ENCODE measurements at regions of chr12 and their contacts with region 1.

Region 1: DNA sequence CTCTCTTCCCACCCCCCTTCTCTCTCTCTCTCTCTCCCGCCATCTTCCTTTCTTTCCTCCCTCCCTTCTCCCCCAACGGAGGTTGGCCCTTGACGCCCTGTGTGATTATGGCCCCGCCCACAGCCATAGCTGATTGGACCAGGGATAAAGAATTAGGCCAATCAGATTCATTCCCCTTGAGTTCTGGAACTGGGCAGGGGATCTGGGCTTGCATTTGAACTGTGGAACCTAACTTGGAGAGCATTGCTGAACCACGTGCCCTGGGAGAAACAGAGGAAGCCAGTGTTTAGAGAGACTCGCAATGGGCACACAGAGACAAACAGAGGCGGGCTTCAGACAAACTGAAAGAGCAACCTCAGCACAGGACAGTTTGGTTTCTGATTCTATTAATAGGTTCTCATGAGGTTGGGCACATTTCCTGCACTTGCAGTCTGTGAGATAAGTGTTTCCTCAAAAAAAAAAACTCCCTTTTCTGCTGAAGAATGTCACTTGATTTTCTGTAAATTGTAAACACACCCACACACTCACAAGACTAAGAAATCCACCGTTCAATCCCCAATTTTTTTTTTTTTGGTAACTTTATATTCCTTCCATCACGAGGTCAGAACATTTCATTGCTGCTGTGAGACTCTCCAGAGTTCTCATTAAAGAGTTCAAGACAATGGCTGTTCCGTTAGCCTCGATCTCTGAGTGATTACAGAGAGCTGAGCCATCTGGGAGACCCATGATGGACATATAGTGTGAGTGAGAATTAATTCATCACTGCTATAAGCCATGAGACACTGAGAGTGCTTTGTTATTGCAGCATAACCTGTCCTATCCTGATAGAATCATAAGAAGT is 3.5 kb upstream of the P2RX7 start:
- DNase-seq: peak; percentile 81
- H3K4me3 Mint-ChIP-seq: peak overlapping the region; percentile 68
- H3K27ac Mint-ChIP-seq: peak overlapping the region; percentile 99
- H3K4me1 Mint-ChIP-seq: peaks cover 80% of the 10 kb centered on the region
- H3K27me3 Mint-ChIP-seq: no peaks in the 10 kb centered on the region

Region 2: DNA sequence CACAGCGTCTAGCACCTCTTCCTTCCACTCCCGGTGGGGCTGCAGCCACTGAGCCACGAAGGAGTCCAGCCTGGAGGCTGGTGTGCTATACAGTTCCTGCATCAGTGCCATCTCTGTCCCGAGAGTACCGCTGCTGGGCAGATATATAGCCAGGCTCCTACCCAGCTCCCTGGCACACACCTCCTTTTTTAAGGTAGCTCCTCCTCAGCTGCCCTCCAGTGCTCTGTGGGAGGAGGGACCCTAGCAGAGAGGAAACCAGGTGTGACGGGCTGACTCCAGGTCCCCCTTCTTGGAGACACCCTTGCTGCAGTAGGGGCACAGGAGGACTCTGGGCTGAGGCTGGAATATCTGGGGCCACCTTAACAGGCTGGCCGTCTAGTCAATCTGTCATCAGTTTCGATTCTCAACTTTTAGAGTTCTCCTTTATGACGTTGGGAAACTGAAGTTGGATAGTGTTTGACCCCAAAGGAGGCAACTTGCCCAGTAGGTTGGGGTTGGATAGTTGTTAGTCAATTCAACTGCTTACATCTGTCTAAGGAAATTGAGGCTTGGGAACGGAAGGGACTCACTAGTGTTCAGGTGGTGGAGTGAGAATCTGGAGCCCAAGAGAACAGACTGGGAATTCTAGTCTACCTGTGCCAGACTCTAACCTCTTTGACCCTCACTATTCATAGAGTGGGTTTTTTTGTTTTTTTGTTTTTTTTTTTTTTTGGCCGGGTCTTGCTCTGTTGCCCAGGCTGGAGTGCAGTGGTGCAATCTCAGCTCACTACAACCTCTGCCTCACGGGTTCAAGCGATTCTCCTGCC is 90.1 kb before region 1 on chr12 and contains the start of gene OASL:
- intact Hi-C with region 1: loop called (anchors 10 kb)
- DNase-seq: peak; percentile 54
- H3K4me3 Mint-ChIP-seq: peak within 1 kb of the TSS; percentile 91
- H3K27ac Mint-ChIP-seq: peak within 1 kb of the TSS; percentile 84
- H3K4me1 Mint-ChIP-seq: peaks cover 51% of the 10 kb centered on the region
- H3K27me3 Mint-ChIP-seq: peaks cover 12% of the 10 kb centered on the region
- total RNA-seq, gene OASL: 2.4 and 3.1 TPM in 2 replicates

Region 3: DNA sequence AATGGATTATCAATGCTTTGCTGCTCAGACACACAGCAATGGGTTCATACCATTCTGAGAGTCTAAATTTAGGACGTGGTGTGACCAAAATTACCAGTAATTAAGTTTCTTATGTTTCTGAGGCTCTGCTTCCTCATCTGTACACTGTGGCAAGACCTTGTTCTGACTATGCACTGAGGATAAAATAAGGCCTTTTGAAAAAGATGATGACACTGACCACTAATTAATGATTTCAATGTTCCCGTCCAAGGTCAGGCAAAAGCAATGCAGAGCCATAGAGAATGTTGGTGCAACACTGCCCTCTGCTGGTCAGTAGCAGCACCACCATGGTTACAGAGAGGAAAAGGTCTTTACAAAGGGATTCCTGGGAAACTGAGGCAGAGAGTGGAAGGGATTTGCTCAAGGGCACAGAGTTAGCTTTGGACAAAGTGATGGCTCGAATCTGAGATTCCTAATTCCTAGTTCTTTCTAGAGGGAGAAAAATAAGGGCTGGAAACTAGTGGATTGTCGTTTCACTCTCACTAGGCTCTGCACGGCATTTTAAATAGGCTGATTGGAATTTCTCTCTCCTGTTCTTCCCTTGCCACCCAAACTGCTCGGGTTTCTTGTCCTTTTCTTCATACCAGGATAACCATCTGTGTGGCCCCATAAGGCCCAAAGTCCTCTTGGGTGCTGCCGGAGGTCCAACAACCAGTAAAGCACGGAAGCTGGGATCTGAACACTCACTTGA is 18.8 kb before region 1 on chr12:
- intact Hi-C with region 1: loop called (anchors 1 kb)
- DNase-seq: peak; percentile 40
- H3K4me3 Mint-ChIP-seq: no peak overlapping the region
- H3K27ac Mint-ChIP-seq: peak overlapping the region; percentile 21
- H3K4me1 Mint-ChIP-seq: peaks cover 8% of the 10 kb centered on the region
- H3K27me3 Mint-ChIP-seq: peaks cover 4% of the 10 kb centered on the region

Region 4: GRCh38 chr12:121144416-121144914 is 15.3 kb after region 1 on chr12:
- intact Hi-C with region 1: loop called (anchors 1 kb)
- DNase-seq: no peak
- H3K4me3 Mint-ChIP-seq: peak overlapping the region; percentile 58
- H3K27ac Mint-ChIP-seq: peak overlapping the region; percentile 81
- H3K4me1 Mint-ChIP-seq: peaks cover 27% of the 10 kb centered on the region
- H3K27me3 Mint-ChIP-seq: no peaks in the 10 kb centered on the region

Region 5: GRCh38 chr12:121181181-121181580 is 52.0 kb after region 1 on chr12:
- intact Hi-C with region 1: loop called (anchors 1 kb)
- DNase-seq: no peak
- H3K4me3 Mint-ChIP-seq: no peak overlapping the region
- H3K27ac Mint-ChIP-seq: no peak overlapping the region
- H3K4me1 Mint-ChIP-seq: peaks cover 5% of the 10 kb centered on the region
- H3K27me3 Mint-ChIP-seq: no peaks in the 10 kb centered on the region

Region 6: GRCh38 chr12:121209624-121210572 is 80.7 kb after region 1 on chr12 and contains the start of gene P2RX4:
- intact Hi-C with region 1: loop called (anchors 1 kb)
- DNase-seq: peak; percentile 87
- H3K4me3 Mint-ChIP-seq: peak within 1 kb of the TSS; percentile 85
- H3K27ac Mint-ChIP-seq: peak within 1 kb of the TSS; percentile 94
- H3K4me1 Mint-ChIP-seq: peaks cover 33% of the 10 kb centered on the region
- H3K27me3 Mint-ChIP-seq: peaks cover 1% of the 10 kb centered on the region
- total RNA-seq, gene P2RX4: 22.8 and 25.3 TPM in 2 replicates

Region 7: DNA sequence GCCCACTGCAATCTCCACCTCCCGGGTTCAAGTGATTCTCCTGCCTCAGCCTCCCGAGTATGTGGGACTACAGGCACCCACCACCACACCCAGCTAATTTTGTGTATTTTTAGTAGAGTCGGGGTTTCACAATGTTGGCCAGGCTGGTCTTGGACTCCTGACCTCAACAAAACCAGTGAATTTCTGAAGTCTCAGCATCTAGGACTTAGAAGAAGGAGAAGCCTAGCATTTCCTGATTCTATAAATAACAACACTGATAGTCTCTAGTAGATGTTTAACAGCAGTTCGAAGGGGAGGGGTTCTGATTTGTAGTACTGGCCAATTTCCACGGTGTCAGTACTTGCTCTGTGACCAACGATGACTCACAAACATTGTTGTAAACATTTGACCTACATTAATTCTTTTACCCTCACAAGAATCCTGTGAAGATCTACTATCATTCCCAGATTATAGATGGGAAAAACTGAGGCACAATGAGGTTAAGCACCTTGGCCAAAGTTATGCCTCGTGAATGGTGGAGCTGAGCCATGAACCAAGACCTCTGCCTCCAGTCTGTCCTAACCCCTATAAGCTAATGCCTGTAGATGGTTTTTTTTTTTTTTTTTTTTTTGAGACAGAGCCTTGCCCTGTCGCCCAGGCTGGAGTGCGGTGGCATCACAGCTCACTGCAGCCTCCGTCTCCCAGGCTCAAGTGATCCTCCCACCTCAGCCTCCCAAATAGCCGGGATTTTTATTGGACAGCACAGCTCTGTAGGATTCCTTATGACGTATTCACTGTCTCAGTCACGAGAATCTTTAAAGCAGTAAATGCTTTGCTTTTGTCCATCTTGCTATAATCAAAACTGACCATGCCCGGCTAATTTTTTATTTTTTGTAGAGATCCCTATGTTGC is 85.9 kb after region 1 on chr12:
- intact Hi-C with region 1: loop called (anchors 1 kb)
- DNase-seq: no peak
- H3K4me3 Mint-ChIP-seq: peak overlapping the region; percentile 21
- H3K27ac Mint-ChIP-seq: peak overlapping the region; percentile 81
- H3K4me1 Mint-ChIP-seq: peaks cover 40% of the 10 kb centered on the region
- H3K27me3 Mint-ChIP-seq: no peaks in the 10 kb centered on the region